Adrenal gland (tissue), 19 donors: ENCODE measurements at regions of chr5 and their contacts with region 1.

Region 1: GRCh38 chr5:122704243-122705036 is 70.4 kb upstream of the SNX2 start:
- DNase-seq: no peak
- H3K4me3 ChIP-seq: no peak overlapping the region
- H3K27ac ChIP-seq: no peak overlapping the region
- H3K4me1 ChIP-seq: no peaks in the 10 kb centered on the region
- H3K27me3 ChIP-seq: no peaks in the 10 kb centered on the region
- CTCF ChIP-seq: peak; percentile 42 to 61 (median 53)
- POLR2A ChIP-seq: no peak

Region 2: GRCh38 chr5:122864400-122864799 is 160.0 kb after region 1 on chr5:
- intact Hi-C with region 1: loop called in 1 of 2 experiments (anchors 10 kb)
- DNase-seq: no peak
- H3K4me3 ChIP-seq: no peak overlapping the region
- H3K27ac ChIP-seq: no peak overlapping the region
- H3K4me1 ChIP-seq: no peaks in the 10 kb centered on the region
- H3K27me3 ChIP-seq: no peaks in the 10 kb centered on the region
- CTCF ChIP-seq: no peak
- POLR2A ChIP-seq: no peak

Region 3: GRCh38 chr5:122965111-122965510 is 260.7 kb after region 1 on chr5:
- intact Hi-C with region 1: no loop called
- DNase-seq: no peak
- H3K4me3 ChIP-seq: no peak overlapping the region
- H3K27ac ChIP-seq: no peak overlapping the region
- H3K4me1 ChIP-seq: no peaks in the 10 kb centered on the region
- H3K27me3 ChIP-seq: no peaks in the 10 kb centered on the region
- CTCF ChIP-seq: no peak
- POLR2A ChIP-seq: no peak

Region 4: GRCh38 chr5:123028222-123028621 is 323.8 kb after region 1 on chr5:
- intact Hi-C with region 1: no loop called
- DNase-seq: no peak
- H3K4me3 ChIP-seq: no peak overlapping the region
- H3K27ac ChIP-seq: no peak overlapping the region
- H3K4me1 ChIP-seq: no peaks in the 10 kb centered on the region
- H3K27me3 ChIP-seq: no peaks in the 10 kb centered on the region
- CTCF ChIP-seq: no peak
- POLR2A ChIP-seq: no peak